ENCODE measurements at regions of chr16 and their contacts with region 1.

Region 1: DNA sequence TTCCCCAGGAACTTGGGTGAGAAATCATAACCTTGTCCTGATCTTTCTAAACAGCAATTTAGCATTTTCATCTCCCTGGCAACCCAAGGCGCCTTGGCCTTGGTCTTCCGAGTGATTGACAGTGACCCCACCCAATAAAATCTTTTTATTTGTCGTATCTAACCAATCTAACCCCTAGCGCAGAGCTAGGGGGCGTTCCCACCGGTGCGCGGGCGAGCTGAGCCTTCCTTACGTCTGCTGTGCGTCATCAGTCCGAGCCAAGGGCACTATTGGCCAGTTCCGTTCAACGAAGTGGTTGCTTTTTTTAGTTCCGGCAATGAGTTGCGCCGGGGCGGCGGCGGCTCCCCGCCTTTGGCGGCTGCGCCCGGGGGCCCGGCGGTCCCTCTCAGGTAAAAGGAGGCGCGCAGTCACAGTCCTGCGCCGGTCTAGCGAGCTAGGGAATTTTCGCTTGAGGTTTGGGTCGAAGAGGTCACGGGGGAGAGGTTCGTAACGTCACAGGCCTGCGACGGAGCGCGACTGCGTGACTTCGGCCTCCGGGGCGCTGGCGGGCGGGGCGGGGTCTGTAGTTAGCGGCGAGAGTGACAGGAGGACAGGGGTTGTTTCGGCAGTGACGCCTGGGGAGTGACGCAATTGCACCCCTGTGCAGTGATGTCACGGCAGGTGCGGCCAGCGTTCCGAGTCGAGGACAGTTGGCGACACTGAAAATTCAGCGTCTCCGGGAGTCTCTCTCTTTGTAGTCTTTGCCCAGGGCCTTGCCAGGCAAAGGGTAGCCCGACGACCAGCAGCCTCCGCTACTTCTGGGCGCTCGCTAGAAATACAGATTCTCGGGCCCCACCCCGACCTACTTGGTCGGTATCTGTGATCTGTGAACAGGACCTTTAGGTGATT is at the start of gene COQ7:
- DNase-seq: peak; percentile 99
- H3K4me3 Mint-ChIP-seq: peak within 1 kb of the TSS; percentile 89
- H3K27ac Mint-ChIP-seq: peak within 1 kb of the TSS; percentile 92
- H3K4me1 Mint-ChIP-seq: peaks cover 8% of the 10 kb centered on the region
- H3K27me3 Mint-ChIP-seq: no peaks in the 10 kb centered on the region
- total RNA-seq, gene COQ7: 16.4 to 21.3 TPM

Region 2: GRCh38 chr16:18801197-18801972 is 266.2 kb before region 1 on chr16 and contains the start of gene ARL6IP1:
- CTCF ChIA-PET with region 1: interaction called, 3 read pairs
- intact Hi-C with region 1: loop called (anchors 1 kb)
- DNase-seq: peak; percentile 99
- H3K4me3 Mint-ChIP-seq: peak within 1 kb of the TSS; percentile 87
- H3K27ac Mint-ChIP-seq: peak within 1 kb of the TSS; percentile 98
- H3K4me1 Mint-ChIP-seq: peaks cover 51% of the 10 kb centered on the region
- H3K27me3 Mint-ChIP-seq: no peaks in the 10 kb centered on the region
- total RNA-seq, gene ARL6IP1: 114 to 123 TPM

Region 3: GRCh38 chr16:19001788-19002187 is 65.8 kb before region 1 on chr16:
- CTCF ChIA-PET with region 1: no interaction called
- intact Hi-C with region 1: no loop called
- DNase-seq: no peak
- H3K4me3 Mint-ChIP-seq: no peak overlapping the region
- H3K27ac Mint-ChIP-seq: no peak overlapping the region
- H3K4me1 Mint-ChIP-seq: no peaks in the 10 kb centered on the region
- H3K27me3 Mint-ChIP-seq: peaks cover 3% of the 10 kb centered on the region

Region 4: GRCh38 chr16:19086322-19087199 is 19.0 kb after region 1 on chr16:
- CTCF ChIA-PET with region 1: interaction called, 14 read pairs
- intact Hi-C with region 1: no loop called
- DNase-seq: peak; percentile 78
- H3K4me3 Mint-ChIP-seq: peak overlapping the region; percentile 56
- H3K27ac Mint-ChIP-seq: no peak overlapping the region
- H3K4me1 Mint-ChIP-seq: no peaks in the 10 kb centered on the region
- H3K27me3 Mint-ChIP-seq: peaks cover 8% of the 10 kb centered on the region

Region 5: GRCh38 chr16:19717771-19718602 is 650.4 kb after region 1 on chr16 and contains the starts of genes IQCK and KNOP1:
- CTCF ChIA-PET with region 1: no interaction called
- intact Hi-C with region 1: loop called (anchors 1 kb)
- DNase-seq: peak; percentile 89
- H3K4me3 Mint-ChIP-seq: peak within 1 kb of the TSS; percentile 91
- H3K27ac Mint-ChIP-seq: peak within 1 kb of the TSS; percentile 78
- H3K4me1 Mint-ChIP-seq: peaks cover 45% of the 10 kb centered on the region
- H3K27me3 Mint-ChIP-seq: no peaks in the 10 kb centered on the region
- total RNA-seq, gene IQCK: 2.8 to 3.9 TPM
- total RNA-seq, gene KNOP1: 24.4 to 26.1 TPM

Measured in activated naive CD4-positive, alpha-beta T cell treated with anti-CD3 and anti-CD28 coated beads for 36 hours (primary cell).